Activated T-helper 1 cell treated with anti-CD3 and anti-CD28 coated beads, Interleukin-12 subunit alpha, Interleukin-12 subunit beta, Interleukin-2, Interleukin-4 antibody, amounts not matched to agents 30 ng/mL and 10 ng/mL and 1 ng/mL, durations not matched to agents 14 hours and 24 hours and 36 hours (primary cell): ENCODE measurements at regions of chr6 and their contacts with region 1.

Region 1: GRCh38 chr6:45801471-45802289 is 214.0 kb downstream of the CLIC5 start:
- DNase-seq: peak; percentile 33
- H3K4me3 Mint-ChIP-seq: peak overlapping the region; percentile 2
- H3K27ac Mint-ChIP-seq: no peak overlapping the region
- H3K4me1 Mint-ChIP-seq: no peaks in the 10 kb centered on the region
- H3K27me3 Mint-ChIP-seq: no peaks in the 10 kb centered on the region

Region 2: DNA sequence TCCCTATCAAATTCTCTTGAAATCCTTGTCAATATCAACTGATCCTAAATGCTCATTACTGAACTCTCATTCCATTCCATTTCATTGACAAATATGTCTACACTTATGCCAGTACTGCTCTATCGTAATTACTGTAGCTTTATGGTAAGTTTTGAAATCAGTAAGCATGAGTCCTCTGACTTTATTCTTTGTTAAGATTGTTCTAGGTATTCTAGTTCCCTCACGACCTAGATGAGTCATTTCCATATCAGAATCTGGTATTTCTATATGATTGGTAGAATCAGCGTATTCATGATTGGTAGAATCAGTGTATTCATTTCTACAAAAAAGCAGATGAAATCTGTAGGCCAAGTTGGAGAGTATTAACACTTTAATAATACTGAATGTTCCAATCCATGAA is 792.1 kb before region 1 on chr6:
- intact Hi-C with region 1: loop called (anchors 5 kb)
- DNase-seq: no peak
- H3K4me3 Mint-ChIP-seq: no peak overlapping the region
- H3K27ac Mint-ChIP-seq: peak overlapping the region; percentile 67
- H3K4me1 Mint-ChIP-seq: peaks cover 30% of the 10 kb centered on the region
- H3K27me3 Mint-ChIP-seq: no peaks in the 10 kb centered on the region

Region 3: DNA sequence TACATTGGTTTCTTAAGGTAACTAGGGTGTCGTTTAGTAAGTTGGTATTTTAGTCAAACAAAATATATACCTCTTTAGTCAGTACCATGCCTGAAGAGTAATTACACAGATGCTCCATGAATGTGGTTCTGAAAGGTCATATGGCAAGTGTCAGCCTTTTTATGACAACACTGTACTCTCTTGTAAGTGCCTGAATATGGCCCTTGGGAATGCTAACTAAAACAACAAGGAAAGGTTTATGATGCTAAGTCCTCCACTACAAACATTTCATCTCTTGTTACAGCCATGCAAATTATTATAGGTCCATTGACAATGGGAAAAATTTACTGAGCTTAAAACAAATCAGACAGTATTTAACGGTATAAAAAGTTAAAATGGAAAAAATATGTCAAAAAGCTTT is 385.0 kb before region 1 on chr6:
- intact Hi-C with region 1: loop called (anchors 1 kb)
- DNase-seq: no peak
- H3K4me3 Mint-ChIP-seq: no peak overlapping the region
- H3K27ac Mint-ChIP-seq: no peak overlapping the region
- H3K4me1 Mint-ChIP-seq: peaks cover 53% of the 10 kb centered on the region
- H3K27me3 Mint-ChIP-seq: peaks cover 20% of the 10 kb centered on the region

Region 4: DNA sequence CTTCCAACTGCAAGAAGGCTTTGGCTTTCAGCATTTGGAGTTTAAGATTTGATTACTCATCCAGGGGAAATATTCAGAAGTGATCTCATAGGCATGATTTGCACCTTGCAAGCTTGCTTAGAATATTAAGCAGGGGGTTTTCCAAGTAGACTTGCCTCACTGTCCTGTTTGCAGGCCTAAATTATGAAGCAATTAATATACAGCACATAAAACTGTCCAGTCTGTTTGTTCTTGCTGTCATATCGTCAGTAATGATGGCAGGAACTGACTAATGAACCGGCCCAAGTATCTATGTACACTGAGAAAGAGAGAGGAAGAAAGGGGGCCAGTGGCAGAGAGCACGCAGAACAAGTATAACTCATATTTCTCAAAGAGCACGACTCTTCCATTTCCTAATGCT is 211.5 kb before region 1 on chr6:
- intact Hi-C with region 1: loop called (anchors 5 kb)
- DNase-seq: no peak
- H3K4me3 Mint-ChIP-seq: no peak overlapping the region
- H3K27ac Mint-ChIP-seq: peak overlapping the region; percentile 74
- H3K4me1 Mint-ChIP-seq: peaks cover 87% of the 10 kb centered on the region
- H3K27me3 Mint-ChIP-seq: no peaks in the 10 kb centered on the region

Region 5: GRCh38 chr6:45741437-45742171 is 60.1 kb before region 1 on chr6:
- intact Hi-C with region 1: loop called (anchors 1 kb)
- DNase-seq: no peak
- H3K4me3 Mint-ChIP-seq: peak overlapping the region; percentile 2
- H3K27ac Mint-ChIP-seq: peak overlapping the region; percentile 27
- H3K4me1 Mint-ChIP-seq: peaks cover 44% of the 10 kb centered on the region
- H3K27me3 Mint-ChIP-seq: peaks cover 3% of the 10 kb centered on the region

Region 6: DNA sequence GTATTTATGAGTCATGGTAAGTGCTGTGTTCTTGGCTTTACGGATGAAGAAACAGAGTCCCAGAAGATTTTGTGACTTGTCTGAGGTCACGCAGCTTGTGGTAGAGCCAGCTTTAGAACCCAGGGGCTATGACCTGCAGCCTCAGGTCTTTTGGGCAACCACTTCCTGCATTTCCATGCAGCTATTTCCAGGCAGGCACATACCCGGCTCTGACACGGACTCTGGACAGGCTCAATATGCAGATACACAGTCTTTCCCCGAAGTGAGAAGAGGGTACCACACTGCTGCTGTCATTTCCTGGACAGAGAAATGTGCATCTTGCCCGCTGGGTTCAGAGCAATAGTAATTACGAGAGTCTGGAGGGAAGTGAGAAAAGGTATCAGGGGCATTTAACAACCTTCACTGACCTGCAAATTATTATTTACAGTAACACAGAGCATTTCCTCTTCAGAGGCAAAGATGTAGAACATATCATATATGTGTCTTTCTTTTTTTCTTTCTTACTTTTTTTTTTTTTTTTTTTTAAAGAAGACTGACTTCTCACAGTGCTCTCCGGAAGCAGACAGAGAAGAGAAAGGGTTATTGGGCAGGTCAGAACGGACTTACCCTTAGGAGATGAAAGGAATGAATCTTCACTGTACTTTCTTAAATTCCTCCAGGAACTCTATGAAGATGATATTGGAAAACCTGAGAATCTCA is 28.9 kb after region 1 on chr6:
- intact Hi-C with region 1: loop called (anchors 1 kb)
- DNase-seq: peak; percentile 44
- H3K4me3 Mint-ChIP-seq: peak overlapping the region; percentile 70
- H3K27ac Mint-ChIP-seq: peak overlapping the region; percentile 85
- H3K4me1 Mint-ChIP-seq: peaks cover 47% of the 10 kb centered on the region
- H3K27me3 Mint-ChIP-seq: no peaks in the 10 kb centered on the region

Region 7: GRCh38 chr6:45864651-45865050 is 63.0 kb after region 1 on chr6:
- intact Hi-C with region 1: no loop called
- DNase-seq: no peak
- H3K4me3 Mint-ChIP-seq: no peak overlapping the region
- H3K27ac Mint-ChIP-seq: no peak overlapping the region
- H3K4me1 Mint-ChIP-seq: no peaks in the 10 kb centered on the region
- H3K27me3 Mint-ChIP-seq: peaks cover 14% of the 10 kb centered on the region

Region 8: DNA sequence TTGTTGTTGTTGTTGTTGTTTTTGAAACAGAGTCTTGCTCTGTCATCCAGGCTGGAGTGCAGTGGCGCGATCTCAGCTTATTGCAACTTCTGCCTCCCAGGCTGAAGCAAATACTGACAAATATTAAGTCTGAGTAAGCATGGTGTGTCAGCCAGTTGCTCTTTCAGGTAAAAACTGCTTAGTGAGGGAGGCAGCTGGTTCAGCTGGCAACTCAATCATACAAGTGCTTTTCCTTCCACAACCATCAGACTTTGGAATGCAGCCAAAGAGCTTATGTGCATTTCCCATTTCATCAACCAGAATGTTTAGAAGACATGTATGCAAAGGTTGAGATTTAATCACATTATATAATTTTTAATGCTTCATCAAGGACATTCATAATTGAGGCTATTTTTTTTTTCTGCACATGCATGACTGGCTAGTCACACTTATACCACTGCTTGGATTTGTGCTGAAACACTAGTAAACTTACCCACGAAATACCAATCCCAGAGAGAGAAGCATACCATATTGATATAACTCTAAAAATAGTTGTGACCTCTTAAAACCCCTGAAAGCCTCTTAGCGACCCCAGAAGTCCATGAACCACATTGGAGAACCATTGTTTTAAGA is 158.0 kb after region 1 on chr6:
- intact Hi-C with region 1: no loop called
- DNase-seq: no peak
- H3K4me3 Mint-ChIP-seq: no peak overlapping the region
- H3K27ac Mint-ChIP-seq: no peak overlapping the region
- H3K4me1 Mint-ChIP-seq: no peaks in the 10 kb centered on the region
- H3K27me3 Mint-ChIP-seq: peaks cover 6% of the 10 kb centered on the region